ENCODE measurements at regions of chr1 and their contacts with region 1.

Region 1: DNA sequence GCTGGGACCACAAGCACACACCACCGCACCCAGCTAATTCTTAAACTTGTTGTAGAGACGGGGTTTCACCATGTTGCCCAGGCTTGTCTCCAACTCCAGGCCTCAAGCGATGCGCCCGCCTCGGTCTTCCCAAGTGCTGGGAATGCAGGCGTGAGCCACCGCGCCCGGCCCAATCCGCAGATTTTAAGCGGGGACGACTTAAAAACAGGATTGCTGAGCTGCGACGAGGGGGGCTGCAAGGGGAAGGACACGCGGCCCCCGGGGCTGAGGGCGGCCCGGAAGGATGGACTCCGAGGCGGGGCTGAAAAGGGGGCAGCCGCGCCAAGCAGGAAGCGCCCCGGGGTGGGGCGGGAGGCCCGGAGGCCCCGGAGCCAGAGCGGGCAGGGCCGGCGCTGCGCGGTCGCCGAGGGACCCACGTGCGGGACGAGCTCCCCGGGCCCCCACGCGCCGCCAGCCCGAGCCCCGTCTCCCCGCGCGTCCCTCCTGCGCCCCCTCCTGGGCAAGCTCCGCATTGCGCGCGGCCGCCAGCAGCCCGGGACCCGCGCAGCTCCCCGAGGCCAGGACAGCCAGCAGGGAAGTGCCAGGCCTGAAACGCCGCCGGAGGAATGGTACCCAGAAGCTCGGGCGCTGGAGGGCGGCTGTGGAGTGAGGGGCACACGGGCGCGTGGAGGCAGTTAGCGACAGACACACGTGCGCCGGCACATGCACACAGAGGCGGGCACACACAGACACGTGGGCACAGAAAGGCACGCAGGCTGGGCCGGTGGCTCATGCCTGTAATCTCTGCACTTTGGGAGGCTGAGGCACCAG is 5.5 kb upstream of the PRKCZ start:
- DNase-seq: peak; percentile 87
- ATAC-seq: peak; percentile 79

Region 2: DNA sequence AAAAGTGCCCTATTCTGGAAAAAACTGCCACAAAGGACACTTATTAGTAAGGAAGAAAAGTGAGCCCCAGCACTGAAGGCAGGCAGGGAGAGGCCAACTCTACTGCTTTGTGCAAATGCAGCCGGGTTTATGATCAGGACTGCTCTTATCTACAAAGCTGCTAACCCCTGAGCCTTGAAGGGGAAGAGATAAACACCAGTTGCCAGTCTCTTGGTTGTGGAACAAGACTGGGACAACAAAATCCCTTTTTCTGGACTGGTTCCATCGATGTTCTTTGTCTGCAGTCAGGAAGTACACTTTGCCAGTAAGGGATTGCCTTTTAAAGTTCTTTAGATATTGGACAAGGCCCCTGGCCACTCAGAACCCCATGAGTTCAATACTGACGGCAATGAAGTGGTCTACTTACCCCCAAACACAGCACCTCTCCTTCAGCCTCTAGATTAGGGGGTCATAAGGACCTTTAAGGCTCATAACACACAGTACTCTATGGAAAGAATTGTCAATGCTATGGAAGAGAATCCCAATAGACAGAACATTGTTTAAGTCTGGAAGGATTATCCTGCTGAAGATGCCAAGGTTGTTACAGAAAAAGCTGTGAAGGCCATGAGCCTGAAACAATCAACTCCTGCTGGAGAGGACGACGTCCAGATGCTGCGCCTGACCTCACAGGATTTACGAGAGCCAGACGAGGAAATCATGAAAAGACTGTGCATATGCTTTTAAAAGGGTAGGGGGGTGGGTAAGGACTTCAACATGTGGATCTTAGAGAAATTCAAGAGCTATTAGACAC is 197.5 kb before region 1 on chr1:
- intact Hi-C with region 1: no loop called
- DNase-seq: no peak
- ATAC-seq: peak; percentile 61

Region 3: GRCh38 chr1:1943834-1944570 is 100.7 kb before region 1 on chr1:
- intact Hi-C with region 1: loop called (anchors 1 kb)
- DNase-seq: peak; percentile 75
- ATAC-seq: peak; percentile 70

Region 4: DNA sequence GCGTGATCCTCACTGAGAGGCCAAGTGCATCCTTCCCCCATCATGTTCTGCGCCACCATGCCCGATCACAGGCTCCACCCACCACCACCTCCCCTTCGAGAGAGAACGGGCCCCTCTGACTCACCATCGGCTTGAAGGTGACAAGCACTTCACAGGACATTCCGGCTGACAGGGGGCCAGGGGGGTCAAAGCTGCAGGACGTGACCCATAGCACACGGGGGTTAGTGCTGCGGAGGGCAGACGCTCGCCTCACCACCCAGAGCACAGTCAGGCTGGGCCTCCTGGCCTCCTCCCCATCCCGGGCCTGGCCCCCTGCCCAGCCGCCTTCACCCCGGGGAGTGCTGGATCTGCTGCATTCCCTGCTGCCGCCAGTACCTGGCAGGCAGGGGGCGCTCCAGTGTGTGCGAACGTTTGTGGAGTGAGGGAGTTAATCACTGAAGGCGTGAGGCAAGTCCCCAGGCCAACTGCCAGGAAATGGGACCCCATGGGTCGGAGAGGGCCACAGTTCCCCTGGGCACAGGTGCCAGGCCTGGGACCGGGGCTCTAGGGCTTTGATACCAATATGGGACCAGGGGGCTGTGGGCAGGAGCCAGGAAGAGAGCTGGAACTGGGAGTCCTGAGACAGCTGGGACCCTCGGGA is 84.8 kb before region 1 on chr1:
- intact Hi-C with region 1: loop called (anchors 1 kb)
- DNase-seq: peak; percentile 90
- ATAC-seq: peak; percentile 94

Region 5: DNA sequence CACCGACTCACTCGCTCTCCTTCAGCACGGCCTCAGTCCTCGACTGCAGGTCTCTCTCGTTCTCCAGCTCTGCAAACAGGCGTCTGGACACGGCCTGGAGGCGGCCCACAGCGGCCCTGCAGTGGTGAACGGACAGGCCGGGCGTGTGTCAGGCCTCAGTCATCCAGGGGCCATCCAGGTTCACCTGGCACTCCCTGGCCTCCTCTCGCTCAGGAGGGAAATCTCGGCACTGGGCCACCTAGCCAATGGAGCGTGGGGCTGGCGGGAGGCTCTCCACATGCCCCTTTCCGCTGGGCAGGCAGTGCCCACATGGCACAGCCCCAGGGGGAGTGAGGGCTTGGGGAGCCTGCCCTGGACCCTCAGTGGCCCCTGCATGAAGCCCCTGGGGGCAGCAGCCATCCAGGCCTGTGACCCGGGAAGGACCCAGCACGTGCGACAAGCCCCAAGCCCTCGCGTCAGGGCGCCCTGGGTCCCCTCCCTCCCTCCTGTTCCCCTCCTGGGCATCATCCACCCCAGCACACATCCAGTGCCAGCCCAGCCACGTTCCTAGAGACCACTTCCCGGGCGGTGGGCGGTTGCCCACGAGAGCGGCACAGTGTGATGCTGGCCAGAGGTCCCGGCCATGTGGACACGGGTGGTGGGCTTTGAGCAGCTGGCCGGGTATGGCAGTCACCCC is 59.2 kb before region 1 on chr1:
- intact Hi-C with region 1: no loop called
- DNase-seq: peak; percentile 56
- ATAC-seq: no peak

Measured in Right ventricle myocardium inferior (tissue), 1 donor.